Mammary epithelial cell (primary cell): ENCODE measurements at regions of chr4 and their contacts with region 1.

Region 1: GRCh38 chr4:7956311-7956808 is 16.7 kb upstream of the AFAP1 start:
- DNase-seq: peak; percentile 92
- H3K4me3 ChIP-seq: no peak overlapping the region
- H3K27ac ChIP-seq: peak overlapping the region; percentile 1
- H3K4me1 ChIP-seq: peaks cover 28% of the 10 kb centered on the region
- H3K27me3 ChIP-seq: no peaks in the 10 kb centered on the region
- CTCF ChIP-seq: no peak

Region 2: DNA sequence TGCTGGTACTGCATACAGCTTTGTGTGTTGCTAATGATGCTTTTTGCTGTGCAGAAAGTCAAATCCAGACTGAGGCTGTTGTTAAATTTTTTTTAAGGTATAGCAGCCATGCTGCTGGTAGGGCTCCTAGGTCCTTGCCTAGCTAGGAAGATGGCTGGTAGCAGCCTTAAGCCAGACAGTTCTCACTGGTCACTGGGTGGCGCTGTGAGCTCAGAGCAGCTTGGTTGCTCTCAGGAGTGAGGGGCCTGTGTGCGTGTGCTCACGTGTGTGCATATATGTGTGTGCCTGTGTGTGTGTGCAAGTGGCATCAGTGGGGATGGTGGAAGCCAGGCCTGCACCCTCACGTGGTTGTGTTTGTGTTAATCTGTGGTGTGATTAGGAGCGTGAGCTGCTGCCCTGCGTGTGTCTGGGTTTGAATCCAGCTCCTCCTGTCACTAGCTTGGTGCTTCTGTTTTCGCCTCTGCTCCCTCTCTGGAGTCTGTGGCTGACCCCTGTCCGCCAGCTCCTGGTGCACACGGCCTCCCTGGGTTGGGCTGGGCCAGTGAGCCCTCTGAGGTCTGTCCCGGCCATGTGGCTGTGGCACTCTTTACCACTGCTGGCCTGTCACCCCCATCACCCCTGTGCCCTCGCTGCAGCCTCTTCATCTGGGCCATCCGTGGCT is 717.9 kb before region 1 on chr4:
- CTCF ChIA-PET with region 1: no interaction called
- dilution Hi-C with region 1: no loop called
- in situ Hi-C with region 1: no loop called
- intact Hi-C with region 1: no loop called
- DNase-seq: no peak
- H3K4me3 ChIP-seq: no peak overlapping the region
- H3K27ac ChIP-seq: no peak overlapping the region
- H3K4me1 ChIP-seq: no peaks in the 10 kb centered on the region
- H3K27me3 ChIP-seq: no peaks in the 10 kb centered on the region
- CTCF ChIP-seq: no peak

Region 3: GRCh38 chr4:7904952-7905915 is 51.1 kb before region 1 on chr4:
- CTCF ChIA-PET with region 1: no interaction called
- dilution Hi-C with region 1: loop called (anchors 5 kb)
- in situ Hi-C with region 1: no loop called
- intact Hi-C with region 1: no loop called
- DNase-seq: peak; percentile 60
- H3K4me3 ChIP-seq: no peak overlapping the region
- H3K27ac ChIP-seq: peak overlapping the region; percentile 4
- H3K4me1 ChIP-seq: peaks cover 33% of the 10 kb centered on the region
- H3K27me3 ChIP-seq: no peaks in the 10 kb centered on the region
- CTCF ChIP-seq: no peak

Region 4: GRCh38 chr4:8061145-8061544 is 104.8 kb after region 1 on chr4:
- CTCF ChIA-PET with region 1: no interaction called
- dilution Hi-C with region 1: loop called (anchors 5 kb)
- in situ Hi-C with region 1: no loop called
- intact Hi-C with region 1: no loop called
- DNase-seq: no peak
- H3K4me3 ChIP-seq: no peak overlapping the region
- H3K27ac ChIP-seq: no peak overlapping the region
- H3K4me1 ChIP-seq: no peaks in the 10 kb centered on the region
- H3K27me3 ChIP-seq: no peaks in the 10 kb centered on the region
- CTCF ChIP-seq: no peak